Mammary epithelial cell (primary cell): ENCODE measurements at regions of chr2 and their contacts with region 1.

Region 1: DNA sequence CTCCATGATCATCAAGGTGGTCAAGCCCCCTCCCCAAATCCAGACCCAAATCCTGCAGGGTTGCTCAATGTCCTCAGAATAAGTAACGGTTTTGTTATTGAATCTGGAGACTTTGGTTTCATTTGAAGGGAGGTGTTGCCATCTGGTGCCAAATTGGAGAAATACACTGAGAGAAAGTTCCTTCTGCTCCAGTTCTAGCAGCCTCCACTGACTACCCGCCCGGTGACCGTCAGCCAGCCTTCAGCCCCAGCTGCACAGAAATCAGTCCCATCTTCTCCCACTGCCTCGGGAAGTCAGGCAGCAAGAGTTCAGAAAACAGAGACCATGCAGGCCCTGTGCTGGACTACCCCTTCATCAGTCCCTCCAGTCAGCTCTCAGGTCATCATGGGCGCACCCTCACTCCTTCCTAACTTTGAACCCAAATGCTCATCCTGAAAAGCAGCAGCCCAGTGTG is 38.7 kb downstream of the PKDCC start:
- DNase-seq: peak; percentile 46
- H3K4me3 ChIP-seq: no peak overlapping the region
- H3K27ac ChIP-seq: no peak overlapping the region
- H3K4me1 ChIP-seq: peaks cover 1% of the 10 kb centered on the region
- H3K27me3 ChIP-seq: no peaks in the 10 kb centered on the region
- CTCF ChIP-seq: peak; percentile 62 to 72

Region 2: GRCh38 chr2:41853427-41854216 is 232.9 kb before region 1 on chr2:
- CTCF ChIA-PET with region 1: interaction called, 3 read pairs
- dilution Hi-C with region 1: loop called (anchors 5 kb)
- in situ Hi-C with region 1: loop called in 1 of 2 experiments (anchors 5 kb)
- intact Hi-C with region 1: loop called (anchors 1 kb)
- DNase-seq: peak; percentile 25
- H3K4me3 ChIP-seq: no peak overlapping the region
- H3K27ac ChIP-seq: no peak overlapping the region
- H3K4me1 ChIP-seq: no peaks in the 10 kb centered on the region
- H3K27me3 ChIP-seq: no peaks in the 10 kb centered on the region
- CTCF ChIP-seq: peak; percentile 54 to 79

Region 3: DNA sequence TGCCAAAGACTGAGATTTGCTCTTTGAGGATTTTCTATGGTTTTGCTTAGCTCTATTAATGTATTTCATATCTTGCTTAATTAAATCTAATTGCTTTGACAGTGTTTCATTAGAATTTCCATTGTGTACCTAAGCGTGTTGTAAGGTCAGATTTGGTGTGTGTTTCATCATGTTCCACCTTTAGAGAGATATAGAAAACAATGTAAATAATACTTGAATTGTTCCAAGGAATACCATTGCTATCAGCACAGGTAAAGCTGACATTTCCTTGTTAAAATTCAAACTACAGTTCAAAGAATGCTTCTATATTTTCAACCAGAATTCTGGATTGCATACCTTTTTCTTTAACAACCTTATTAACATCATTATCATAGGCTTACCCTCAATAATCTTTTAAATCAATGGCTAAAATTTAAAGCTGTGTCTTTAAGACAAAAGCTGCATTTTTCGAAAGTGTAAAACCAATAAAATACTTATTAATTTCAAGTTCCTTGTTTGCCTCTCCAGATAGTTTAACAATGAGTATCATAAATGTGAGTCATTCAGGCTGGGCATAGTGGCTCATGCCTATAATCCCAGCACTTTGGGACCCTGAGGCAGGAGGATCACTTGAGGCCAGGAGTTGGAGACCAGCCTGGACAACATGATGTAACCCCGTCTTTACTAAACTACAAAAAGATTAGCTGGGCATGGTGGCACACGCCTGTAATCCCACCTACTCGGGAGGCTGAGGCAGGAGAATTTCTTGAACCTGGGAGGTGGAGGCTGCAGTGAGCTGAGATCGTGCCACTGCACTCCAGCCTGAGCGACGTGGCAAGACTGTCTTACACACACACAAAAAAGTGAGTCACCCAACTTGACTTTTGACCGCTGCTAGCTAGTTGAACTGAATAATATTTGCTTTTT is 226.7 kb before region 1 on chr2:
- CTCF ChIA-PET with region 1: interaction called, 4 read pairs
- dilution Hi-C with region 1: loop called (anchors 5 kb)
- in situ Hi-C with region 1: no loop called
- intact Hi-C with region 1: no loop called
- DNase-seq: peak; percentile 60
- H3K4me3 ChIP-seq: no peak overlapping the region
- H3K27ac ChIP-seq: peak overlapping the region; percentile 36
- H3K4me1 ChIP-seq: peaks cover 5% of the 10 kb centered on the region
- H3K27me3 ChIP-seq: no peaks in the 10 kb centered on the region
- CTCF ChIP-seq: no peak